H1 (cell line): ENCODE measurements at regions of chr2 and their contacts with region 1.

Region 1: GRCh38 chr2:173402405-173402974 is 47.8 kb downstream of the CDCA7 start:
- DNase-seq: peak; percentile 58 to 83
- H3K4me3 ChIP-seq: peak overlapping the region in 3 of 4 experiments; percentile 20 to 50 (median 27); a peak in 3 of 8 replicates
- H3K27ac ChIP-seq: no peak overlapping the region
- H3K4me1 ChIP-seq: peaks cover 3 to 10% (median 6%) of the 10 kb centered on the region in 4 experiments; a peak in 4 of 7 replicates
- H3K27me3 ChIP-seq: no peaks in the 10 kb centered on the region; a peak in 2 of 7 replicates
- CTCF ChIP-seq: peak; percentile 78 to 93 (median 92)
- EP300 ChIP-seq: no peak
- POLR2A ChIP-seq: no peak
- RAD21 ChIP-seq: peak; percentile 98 to 99

Region 2: DNA sequence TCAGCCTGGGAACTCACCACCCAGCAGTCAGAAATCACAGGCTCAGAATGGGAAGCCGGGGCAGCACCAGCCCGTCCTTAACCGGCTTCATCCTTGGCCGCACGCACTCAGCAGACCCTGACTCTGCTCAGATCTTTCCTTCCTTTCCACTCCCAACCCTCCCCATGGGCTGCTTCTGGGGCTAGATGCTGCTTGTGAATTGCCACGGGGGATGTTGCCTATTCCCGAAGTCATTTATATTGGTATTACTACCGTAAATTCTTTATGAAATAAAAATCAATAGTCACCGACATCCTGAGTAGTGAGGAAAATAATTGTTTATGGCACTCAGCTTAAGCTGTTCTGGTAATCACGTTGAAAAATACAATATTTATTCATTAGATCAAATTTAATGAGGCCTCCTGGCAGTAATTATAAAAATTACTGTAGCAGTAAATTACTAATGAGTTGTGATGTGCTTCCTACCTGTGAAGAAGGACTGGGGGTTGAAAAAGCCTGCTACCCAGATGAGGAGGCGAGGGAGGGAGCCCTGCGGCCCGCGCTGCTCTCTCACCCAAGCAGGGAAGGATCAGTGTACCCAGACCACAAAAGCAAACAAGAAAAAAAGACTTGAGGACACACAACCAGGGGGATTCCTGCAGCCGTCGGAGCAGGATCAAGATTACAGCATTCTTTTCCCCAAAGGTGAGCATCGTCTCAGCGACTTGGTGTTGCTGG is 16.3 kb before region 1 on chr2:
- CTCF ChIA-PET with region 1: interaction called, 18 read pairs
- POLR2A ChIA-PET with region 1: no interaction called
- DNase-seq: no peak
- H3K4me3 ChIP-seq: no peak overlapping the region
- H3K27ac ChIP-seq: no peak overlapping the region
- H3K4me1 ChIP-seq: peaks cover 0 to 3% (median 0%) of the 10 kb centered on the region in 4 experiments; a peak in 2 of 7 replicates
- H3K27me3 ChIP-seq: no peaks in the 10 kb centered on the region
- CTCF ChIP-seq: no peak
- EP300 ChIP-seq: no peak
- POLR2A ChIP-seq: no peak
- RAD21 ChIP-seq: no peak

Region 3: DNA sequence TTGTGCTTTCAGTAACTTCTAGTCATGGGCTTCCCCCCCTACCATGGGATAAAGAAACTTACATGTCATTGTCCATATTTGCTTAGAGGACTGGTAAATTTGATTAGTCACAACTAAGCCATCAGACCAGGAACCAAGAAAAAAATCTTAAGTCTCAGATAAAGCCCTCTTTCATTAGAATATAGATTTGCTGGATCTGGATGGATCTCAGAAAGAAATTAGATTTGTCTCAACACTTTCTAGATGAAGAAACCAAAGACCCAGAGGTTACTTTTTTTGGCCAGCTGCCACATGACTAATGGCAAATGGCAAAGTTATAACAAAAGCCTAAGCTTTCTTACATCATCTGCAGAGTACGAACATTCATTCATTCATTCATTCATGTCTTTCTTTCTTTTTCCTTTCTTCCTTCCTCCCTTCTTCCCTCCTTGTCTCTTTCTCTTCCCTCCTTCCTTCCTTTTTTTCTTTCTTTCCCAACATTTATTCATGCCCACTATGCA is 12.4 kb after region 1 on chr2:
- CTCF ChIA-PET with region 1: interaction called, 12 read pairs
- POLR2A ChIA-PET with region 1: no interaction called
- DNase-seq: no peak
- H3K4me3 ChIP-seq: no peak overlapping the region
- H3K27ac ChIP-seq: no peak overlapping the region
- H3K4me1 ChIP-seq: peaks cover 0 to 4% (median 2%) of the 10 kb centered on the region in 4 experiments; a peak in 3 of 7 replicates
- H3K27me3 ChIP-seq: no peaks in the 10 kb centered on the region
- CTCF ChIP-seq: no peak
- EP300 ChIP-seq: no peak
- POLR2A ChIP-seq: no peak
- RAD21 ChIP-seq: no peak